K562 (cell line): ENCODE measurements at regions of chr21 and their contacts with region 1.

Region 1: GRCh38 chr21:41068967-41069642 is 98.9 kb upstream of the BACE2 start:
- DNase-seq: peak; percentile 81 to 84 (median 82)
- ATAC-seq: peak; percentile 97
- H3K4me3 ChIP-seq: no peak overlapping the region
- H3K27ac ChIP-seq: no peak overlapping the region
- H3K4me1 ChIP-seq: no peaks in the 10 kb centered on the region; a peak in 1 of 5 replicates
- H3K27me3 ChIP-seq: no peaks in the 10 kb centered on the region
- CTCF ChIP-seq: peak; percentile 83 to 88 (median 85)
- EP300 ChIP-seq: no peak
- POLR2A ChIP-seq: no peak
- RAD21 ChIP-seq: peak; percentile 62 to 81

Region 2: GRCh38 chr21:39867198-39867650 is 1201.9 kb before region 1 on chr21 and contains the start of gene PCP4:
- CTCF ChIA-PET with region 1: interaction called, 3 read pairs
- POLR2A ChIA-PET with region 1: no interaction called
- in situ Hi-C with region 1: no loop called
- intact Hi-C with region 1: loop called (anchors 1 kb)
- DNase-seq: peak; percentile 64 to 74 (median 70)
- ATAC-seq: peak; percentile 94
- H3K4me3 ChIP-seq: no peak within 1 kb of the TSS
- H3K27ac ChIP-seq: no peak within 1 kb of the TSS
- H3K4me1 ChIP-seq: no peaks in the 10 kb centered on the region
- H3K27me3 ChIP-seq: peaks cover 2 to 4% of the 10 kb centered on the region in 2 experiments; a peak in 1 of 5 replicates
- CTCF ChIP-seq: peak; percentile 79 to 94 (median 88)
- EP300 ChIP-seq: no peak
- POLR2A ChIP-seq: no peak
- RAD21 ChIP-seq: peak in 1 of 2 experiments; percentile 74; a peak in 2 of 4 replicates
- polyA plus RNA-seq, gene PCP4: not detected

Region 3: DNA sequence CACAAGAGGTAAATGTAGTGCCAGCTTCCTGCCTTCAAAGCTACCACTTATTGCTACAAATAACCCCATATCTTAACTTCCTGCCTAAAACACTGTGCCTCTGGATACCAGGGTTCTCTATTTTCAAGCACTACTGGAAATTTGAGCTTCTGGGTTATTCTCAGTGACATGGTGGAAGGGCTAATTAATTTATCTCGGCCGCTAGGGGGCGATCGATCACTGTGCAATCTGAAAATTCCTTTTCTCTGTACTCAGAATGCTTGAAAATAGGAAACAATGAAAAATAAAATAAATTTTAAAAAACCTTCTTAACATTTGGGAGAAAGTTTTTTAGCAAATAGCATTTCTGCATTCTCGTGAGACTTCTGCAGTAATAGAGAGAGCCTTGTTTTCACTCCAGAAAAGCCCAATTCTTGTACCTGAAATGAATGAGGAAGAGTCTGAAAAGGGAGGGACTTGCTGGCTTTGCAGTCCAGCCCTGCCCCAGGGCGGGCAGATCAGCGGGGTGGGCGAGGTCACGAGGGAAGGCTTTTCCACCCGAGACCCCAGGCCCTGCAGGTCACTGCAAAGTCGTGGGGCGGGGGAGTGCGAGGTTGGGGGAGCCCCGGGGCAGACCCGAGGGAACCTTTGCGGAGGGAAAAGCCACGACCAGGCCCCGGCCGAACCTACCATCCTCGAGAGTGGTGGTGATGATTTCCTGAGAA is 925.1 kb before region 1 on chr21:
- CTCF ChIA-PET with region 1: interaction called, 3 read pairs
- POLR2A ChIA-PET with region 1: no interaction called
- in situ Hi-C with region 1: no loop called
- intact Hi-C with region 1: loop called (anchors 2 kb)
- DNase-seq: peak; percentile 56 to 66 (median 59)
- ATAC-seq: peak; percentile 86
- H3K4me3 ChIP-seq: no peak overlapping the region
- H3K27ac ChIP-seq: no peak overlapping the region
- H3K4me1 ChIP-seq: no peaks in the 10 kb centered on the region
- H3K27me3 ChIP-seq: no peaks in the 10 kb centered on the region
- CTCF ChIP-seq: peak; percentile 45 to 84 (median 73); a peak in 5 of 6 replicates
- EP300 ChIP-seq: no peak
- POLR2A ChIP-seq: no peak
- RAD21 ChIP-seq: peak; percentile 65 to 80

Region 4: GRCh38 chr21:41045534-41046268 is 23.4 kb before region 1 on chr21:
- CTCF ChIA-PET with region 1: no interaction called
- POLR2A ChIA-PET with region 1: no interaction called
- in situ Hi-C with region 1: no loop called
- intact Hi-C with region 1: loop called (anchors 1 kb)
- DNase-seq: peak in 3 of 4 experiments; percentile 5 to 32 (median 23)
- ATAC-seq: peak; percentile 61
- H3K4me3 ChIP-seq: no peak overlapping the region
- H3K27ac ChIP-seq: no peak overlapping the region
- H3K4me1 ChIP-seq: no peaks in the 10 kb centered on the region
- H3K27me3 ChIP-seq: no peaks in the 10 kb centered on the region
- CTCF ChIP-seq: 0 out of 6 replicates have a peak, but pooled peaks of 2 of the 3 experiments have one; percentile 7 to 35
- EP300 ChIP-seq: no peak
- POLR2A ChIP-seq: no peak
- RAD21 ChIP-seq: no peak